GM10248 (cell line): ENCODE measurements at regions of chr10 and their contacts with region 1.

Region 1: DNA sequence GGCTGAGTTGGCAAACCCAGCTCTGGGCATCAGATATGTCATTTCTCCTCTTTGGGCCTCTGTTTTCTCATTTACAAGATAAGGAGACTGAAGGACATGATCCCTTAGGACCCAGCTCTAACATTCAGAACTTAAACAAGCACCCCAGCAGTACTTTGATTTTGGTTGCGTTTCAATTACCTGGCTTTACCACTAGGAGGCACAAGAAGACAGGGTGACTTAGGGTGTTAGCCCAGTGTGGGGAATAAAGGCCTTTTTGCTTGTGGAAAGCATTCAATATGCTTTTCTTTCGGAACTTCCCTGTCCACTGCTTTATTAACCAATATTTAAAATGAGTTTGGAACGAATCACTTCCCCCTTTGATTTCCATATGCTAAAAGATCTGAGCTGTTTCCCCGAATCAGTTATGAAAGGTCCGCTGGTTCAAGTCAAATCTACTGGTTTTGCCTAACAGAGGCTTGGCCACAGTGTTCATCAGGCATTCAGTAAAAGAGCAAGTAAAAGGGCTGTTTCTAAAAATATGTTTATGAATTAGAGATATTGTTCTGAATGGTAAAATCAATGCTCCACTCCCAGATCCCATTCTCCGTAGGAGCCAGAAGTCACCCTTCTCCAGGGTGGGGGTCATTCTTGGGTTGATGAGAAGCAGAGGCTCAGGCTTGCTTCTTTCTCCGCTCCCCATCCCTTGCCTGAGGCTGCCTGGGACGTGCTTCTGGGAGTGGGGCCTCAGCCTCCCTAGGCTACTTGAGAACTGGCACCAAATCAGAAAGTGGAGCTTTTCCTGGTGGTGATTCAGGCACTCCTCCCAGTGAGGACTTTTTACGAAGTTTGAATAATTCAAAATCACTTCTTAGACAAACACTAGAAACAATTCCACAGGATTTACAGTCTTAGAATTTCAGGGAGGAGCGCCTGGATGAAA is 105.5 kb downstream of the MYOF start:
- DNase-seq: peak; percentile 65
- CTCF ChIP-seq: peak; percentile 89

Region 2: DNA sequence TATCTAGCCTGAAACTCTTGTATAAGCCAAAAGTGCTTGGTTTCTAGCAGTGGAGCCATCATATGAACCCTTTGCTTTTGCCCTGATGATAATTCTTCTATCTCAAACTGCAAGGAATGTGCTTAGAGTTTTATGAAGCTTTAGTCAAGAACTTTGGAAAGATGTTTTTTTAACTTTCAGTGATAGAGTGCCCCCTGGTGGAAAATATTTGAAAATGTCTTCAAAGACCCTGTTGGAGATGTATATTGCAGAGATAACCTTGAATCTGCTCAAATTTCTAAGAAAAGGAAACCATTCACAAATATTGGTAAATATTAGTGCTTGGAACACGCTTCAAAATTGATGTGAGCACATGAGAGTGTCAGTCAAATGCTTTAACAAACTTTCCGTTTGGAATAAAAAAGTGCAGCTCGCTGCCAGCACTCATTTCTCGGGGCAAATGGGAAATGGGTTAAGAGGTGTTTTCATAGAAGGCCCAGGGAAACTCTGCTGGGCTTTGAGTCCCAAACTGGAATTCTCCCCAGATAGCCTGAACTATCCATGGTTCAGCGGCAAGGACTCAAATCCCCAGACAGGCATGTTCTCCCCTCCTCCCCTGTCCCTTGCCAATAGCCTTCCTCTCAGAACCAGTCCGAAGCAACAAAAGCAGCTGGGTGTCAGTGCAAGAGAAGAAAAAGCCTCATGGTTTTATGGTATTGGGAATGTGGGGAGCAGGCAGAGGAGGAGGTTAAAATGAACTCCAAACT is 23.8 kb before region 1 on chr10:
- CTCF ChIA-PET with region 1: interaction called, 10 read pairs
- POLR2A ChIA-PET with region 1: no interaction called
- DNase-seq: peak; percentile 48
- CTCF ChIP-seq: peak; percentile 54

Region 3: DNA sequence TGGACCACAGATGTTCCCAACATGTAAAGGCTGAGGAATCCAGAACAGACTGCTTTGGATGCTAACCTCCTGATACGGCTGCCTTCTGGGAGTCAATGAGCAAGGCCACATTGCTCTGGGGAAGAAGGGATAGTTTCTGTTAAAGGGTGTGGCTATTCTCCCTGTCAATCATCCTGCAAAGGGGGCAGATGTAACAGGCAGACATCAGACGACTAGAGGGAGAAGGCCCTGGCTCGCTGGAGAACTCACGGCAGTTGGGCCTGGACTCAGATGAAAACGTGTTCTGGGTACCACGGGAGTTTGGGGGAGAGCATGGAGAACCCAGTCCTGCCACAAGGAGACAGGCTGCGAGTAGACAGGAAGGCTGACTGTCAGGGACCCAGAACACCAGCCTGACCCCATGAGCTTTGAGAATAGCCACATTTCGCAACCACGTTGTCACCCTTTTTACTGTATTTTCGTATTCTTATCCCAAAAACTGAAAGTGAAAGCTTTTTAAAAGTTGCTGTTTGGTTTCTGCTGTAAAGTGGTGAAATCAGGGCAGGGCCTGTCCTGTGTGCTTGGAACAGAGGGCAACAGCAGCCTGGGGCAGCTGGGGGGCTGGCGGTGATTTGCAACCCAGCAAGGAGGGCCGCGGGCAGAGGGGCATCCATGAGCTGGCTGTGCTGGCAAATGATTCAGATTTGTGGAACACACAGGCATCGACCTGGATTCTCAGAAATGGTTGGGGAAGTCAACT is 10.2 kb after region 1 on chr10:
- CTCF ChIA-PET with region 1: interaction called, 34 read pairs
- POLR2A ChIA-PET with region 1: no interaction called
- DNase-seq: peak; percentile 21
- CTCF ChIP-seq: no peak

Region 4: DNA sequence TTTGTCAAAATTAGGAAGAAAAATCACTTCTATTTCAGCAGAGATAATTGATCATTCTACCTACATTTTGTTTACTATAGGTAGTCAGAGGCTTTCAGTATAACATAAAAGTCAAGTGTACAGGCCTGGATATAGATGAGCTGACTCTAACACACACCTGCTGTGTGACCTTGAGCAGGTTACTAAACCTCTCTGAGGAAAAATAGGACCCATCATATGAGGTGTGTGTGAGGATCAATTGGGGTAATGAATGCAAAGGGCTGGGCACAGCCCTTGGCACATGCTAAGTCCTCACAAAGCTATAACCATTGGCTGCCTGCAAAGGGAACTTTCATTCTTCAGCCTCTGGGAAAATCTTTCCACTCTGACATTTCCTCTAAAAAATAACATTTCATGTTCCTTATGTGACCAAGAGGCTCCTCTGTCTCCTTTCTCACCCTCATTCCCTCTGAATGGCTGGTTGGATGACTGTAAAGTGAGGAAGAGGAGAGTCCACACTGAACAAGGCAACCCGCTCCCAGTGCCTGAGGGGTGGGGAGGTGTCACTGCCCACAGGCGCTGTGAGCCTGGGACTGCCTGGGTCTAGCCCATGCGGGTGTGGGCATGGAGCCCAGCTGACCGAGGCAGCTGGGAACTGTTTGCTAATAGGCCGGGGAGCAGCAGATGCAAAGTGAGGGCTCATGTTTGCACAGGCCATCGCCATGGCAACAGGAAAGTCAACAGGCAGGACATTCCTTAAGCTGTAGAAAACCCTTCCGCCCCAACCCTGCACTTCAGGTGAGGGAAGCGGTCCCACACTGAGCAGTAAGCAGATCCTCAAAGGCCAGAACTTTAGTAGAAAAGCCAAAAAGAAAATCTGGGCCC is 68.7 kb after region 1 on chr10:
- CTCF ChIA-PET with region 1: interaction called, 11 read pairs
- POLR2A ChIA-PET with region 1: no interaction called
- DNase-seq: no peak
- CTCF ChIP-seq: no peak

Region 5: DNA sequence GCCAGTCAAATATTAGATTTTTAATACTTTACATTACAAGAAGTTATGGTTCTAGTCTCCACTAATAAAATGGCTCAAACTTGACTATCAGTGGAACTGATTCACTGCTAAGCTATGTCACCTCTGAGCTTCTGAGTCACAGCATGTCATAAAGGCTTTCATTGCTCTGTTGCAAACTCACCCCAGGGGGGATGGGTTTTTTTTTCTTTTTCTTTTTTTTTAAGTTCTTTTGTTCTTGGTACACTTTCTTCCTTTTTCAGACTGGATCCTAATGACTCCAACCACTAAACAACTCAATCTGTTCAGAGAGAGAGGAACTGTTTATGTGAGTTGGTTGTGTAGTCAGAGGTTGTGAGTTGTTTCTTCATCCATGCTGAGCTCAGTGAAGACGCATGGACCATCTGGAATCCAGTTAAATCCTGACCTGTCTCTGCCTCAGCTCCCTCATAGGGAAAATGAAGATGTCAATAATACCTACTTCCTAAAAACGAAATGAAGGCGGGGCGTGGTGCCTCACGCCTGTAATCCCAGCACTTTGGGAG is 94.5 kb after region 1 on chr10:
- CTCF ChIA-PET with region 1: interaction called, 21 read pairs
- POLR2A ChIA-PET with region 1: no interaction called
- DNase-seq: no peak
- CTCF ChIP-seq: no peak

Region 6: GRCh38 chr10:93496322-93497041 is 119.8 kb after region 1 on chr10 and contains the start of gene CEP55:
- CTCF ChIA-PET with region 1: interaction called, 254 read pairs
- POLR2A ChIA-PET with region 1: no interaction called
- DNase-seq: peak; percentile 96
- CTCF ChIP-seq: no peak

Region 7: DNA sequence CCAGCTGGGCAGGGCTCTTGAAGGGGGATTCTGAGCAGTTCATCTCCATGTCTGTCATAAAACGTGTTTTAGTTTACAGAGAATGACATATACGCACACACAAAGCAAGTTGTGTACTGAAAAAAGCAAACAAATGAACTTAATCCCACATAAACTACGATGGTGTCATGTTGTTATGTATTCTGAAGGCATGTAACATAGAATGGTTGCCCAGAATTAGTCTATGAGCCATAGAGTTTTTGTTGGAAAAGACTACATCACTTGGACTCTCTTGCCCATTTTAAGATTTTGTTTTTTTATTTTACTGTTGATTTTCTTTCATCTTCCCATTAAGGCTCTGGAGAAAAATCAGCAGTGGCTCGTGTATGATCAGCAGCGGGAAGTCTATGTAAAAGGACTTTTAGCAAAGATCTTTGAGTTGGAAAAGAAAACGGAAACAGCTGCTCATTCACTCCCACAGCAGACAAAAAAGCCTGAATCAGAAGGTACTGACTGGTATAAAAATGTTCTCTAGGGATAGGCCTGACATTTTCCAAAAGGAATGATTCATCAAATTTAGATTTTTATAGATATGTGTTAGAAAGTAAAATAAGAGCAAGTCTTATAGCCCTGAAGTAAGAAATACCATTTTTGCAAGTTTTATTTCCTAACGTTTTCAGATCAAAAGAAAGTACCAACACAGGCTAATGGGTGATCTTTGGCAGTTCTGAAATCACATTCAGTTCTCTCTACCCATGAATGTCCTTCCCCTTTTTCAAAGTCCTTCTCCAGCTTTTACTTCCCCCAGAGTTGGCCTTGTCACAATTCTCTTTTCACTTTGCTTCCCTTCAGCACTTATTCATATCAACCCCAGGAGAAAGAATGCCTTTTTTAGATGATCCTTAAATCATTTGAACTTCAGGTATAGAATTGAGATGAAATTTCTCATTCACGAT is 138.7 kb after region 1 on chr10:
- CTCF ChIA-PET with region 1: interaction called, 150 read pairs
- POLR2A ChIA-PET with region 1: no interaction called
- DNase-seq: no peak
- CTCF ChIP-seq: no peak